ENCODE measurements at regions of chr22 and their contacts with region 1.

Region 1: GRCh38 chr22:37051391-37052385 is at the start of gene KCTD17:
- DNase-seq: peak in 1 of 2 donors; percentile 83
- H3K4me3 ChIP-seq: peak within 1 kb of the TSS; percentile 87 to 95
- H3K27ac ChIP-seq: no peak within 1 kb of the TSS
- H3K4me1 ChIP-seq: peaks cover 6 to 8% of the 10 kb centered on the region in 2 donors
- H3K27me3 ChIP-seq: no peaks in the 10 kb centered on the region
- CTCF ChIP-seq: no peak
- total RNA-seq, gene KCTD17: 34.9 TPM

Region 2: GRCh38 chr22:36787204-36787988 is 264.3 kb before region 1 on chr22:
- intact Hi-C with region 1: no loop called
- DNase-seq: no peak
- H3K4me3 ChIP-seq: no peak overlapping the region
- H3K27ac ChIP-seq: no peak overlapping the region
- H3K4me1 ChIP-seq: no peaks in the 10 kb centered on the region
- H3K27me3 ChIP-seq: no peaks in the 10 kb centered on the region
- CTCF ChIP-seq: no peak

Region 3: GRCh38 chr22:37019309-37020125 is 32.2 kb before region 1 on chr22 and contains the starts of genes MPST and TST:
- intact Hi-C with region 1: loop called (anchors 1 kb)
- DNase-seq: peak; percentile 13 to 81
- H3K4me3 ChIP-seq: peak within 1 kb of the TSS; percentile 88 to 98
- H3K27ac ChIP-seq: peak within 1 kb of the TSS; percentile 88 to 95
- H3K4me1 ChIP-seq: peaks cover 11 to 41% of the 10 kb centered on the region in 2 donors
- H3K27me3 ChIP-seq: no peaks in the 10 kb centered on the region
- CTCF ChIP-seq: peak in 2 of 3 experiments; percentile 11 to 73
- total RNA-seq, gene MPST: 113 TPM
- total RNA-seq, gene TST: 22.7 TPM